WTC11 (cell line): ENCODE measurements at regions of chr19 and their contacts with region 1.

Region 1: GRCh38 chr19:35066691-35067563 is 25.4 kb downstream of the HPN start:
- DNase-seq: peak; percentile 99
- ATAC-seq: peak; percentile 80
- H3K4me3 Mint-ChIP-seq: peak overlapping the region; percentile 29
- H3K27ac Mint-ChIP-seq: peak overlapping the region; percentile 100
- H3K4me1 Mint-ChIP-seq: peaks cover 26% of the 10 kb centered on the region
- H3K27me3 Mint-ChIP-seq: peaks cover 32% of the 10 kb centered on the region
- CTCF ChIP-seq: peak; percentile 92

Region 2: DNA sequence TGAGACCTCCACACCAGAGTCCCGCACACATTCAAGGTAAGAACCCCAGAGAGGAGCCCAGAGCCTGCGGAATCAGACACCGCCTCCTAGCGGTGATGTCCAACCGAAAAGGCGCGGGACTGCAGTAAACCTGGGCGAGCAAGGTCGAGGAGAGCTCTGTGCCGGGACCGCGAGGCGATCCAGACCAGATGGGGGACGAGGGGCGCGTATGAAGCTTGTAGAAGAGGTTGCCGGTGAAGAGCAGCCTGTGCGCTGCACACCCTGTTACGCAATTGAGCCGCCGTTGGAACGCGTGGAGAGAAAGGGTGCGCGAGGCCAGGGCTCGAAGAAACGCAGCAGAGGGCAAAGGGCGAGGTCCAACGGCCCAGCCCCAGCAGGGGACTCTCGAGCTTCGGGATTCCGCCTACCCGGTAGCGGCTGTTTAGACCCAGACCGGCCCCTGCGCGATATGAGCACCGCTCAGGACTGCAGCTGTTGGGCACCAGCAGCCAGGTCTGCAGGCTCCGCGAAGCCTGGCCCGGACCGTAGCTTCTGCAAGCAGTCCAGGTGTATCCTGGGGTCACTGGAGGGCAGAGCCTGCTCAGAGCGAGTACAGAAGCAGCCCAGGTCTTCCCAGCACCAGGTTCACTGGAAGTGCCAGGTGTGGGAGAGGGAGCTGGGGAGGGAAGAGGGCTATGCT is 228.0 kb before region 1 on chr19:
- CTCF ChIA-PET with region 1: interaction called, 13 read pairs
- POLR2A ChIA-PET with region 1: no interaction called
- DNase-seq: peak; percentile 89
- ATAC-seq: peak; percentile 87
- H3K4me3 Mint-ChIP-seq: peak overlapping the region; percentile 75
- H3K27ac Mint-ChIP-seq: no peak overlapping the region
- H3K4me1 Mint-ChIP-seq: peaks cover 19% of the 10 kb centered on the region
- H3K27me3 Mint-ChIP-seq: peaks cover 21% of the 10 kb centered on the region
- CTCF ChIP-seq: peak; percentile 67

Region 3: GRCh38 chr19:34957830-34958751 is 108.8 kb before region 1 on chr19:
- CTCF ChIA-PET with region 1: no interaction called
- POLR2A ChIA-PET with region 1: no interaction called
- DNase-seq: no peak
- ATAC-seq: no peak
- H3K4me3 Mint-ChIP-seq: no peak overlapping the region
- H3K27ac Mint-ChIP-seq: no peak overlapping the region
- H3K4me1 Mint-ChIP-seq: peaks cover 14% of the 10 kb centered on the region
- H3K27me3 Mint-ChIP-seq: peaks cover 22% of the 10 kb centered on the region
- CTCF ChIP-seq: no peak

Region 4: DNA sequence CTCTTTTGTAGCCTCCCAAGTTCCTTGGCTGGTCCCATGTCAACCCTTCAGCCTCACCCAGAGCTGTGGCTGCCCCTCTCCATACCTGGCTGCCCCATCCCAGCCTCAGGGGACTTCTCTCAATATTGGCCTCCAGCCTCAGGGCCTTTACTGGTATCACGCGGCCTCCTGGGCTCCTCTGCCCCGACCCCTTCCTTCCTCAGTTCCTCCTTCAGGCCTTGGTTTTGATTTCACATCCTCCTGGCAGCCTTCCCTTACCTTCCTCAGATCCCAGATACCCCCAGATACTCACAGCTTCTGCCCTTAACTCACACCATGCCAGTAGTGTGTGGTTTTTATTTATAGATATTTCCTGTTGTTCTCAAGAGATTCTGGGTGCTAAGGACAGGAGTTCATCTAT is 49.4 kb before region 1 on chr19:
- CTCF ChIA-PET with region 1: no interaction called
- POLR2A ChIA-PET with region 1: no interaction called
- DNase-seq: no peak
- ATAC-seq: no peak
- H3K4me3 Mint-ChIP-seq: no peak overlapping the region
- H3K27ac Mint-ChIP-seq: no peak overlapping the region
- H3K4me1 Mint-ChIP-seq: peaks cover 7% of the 10 kb centered on the region; the same call in 1 of the 2 replicates
- H3K27me3 Mint-ChIP-seq: no peaks in the 10 kb centered on the region
- CTCF ChIP-seq: no peak

Region 5: DNA sequence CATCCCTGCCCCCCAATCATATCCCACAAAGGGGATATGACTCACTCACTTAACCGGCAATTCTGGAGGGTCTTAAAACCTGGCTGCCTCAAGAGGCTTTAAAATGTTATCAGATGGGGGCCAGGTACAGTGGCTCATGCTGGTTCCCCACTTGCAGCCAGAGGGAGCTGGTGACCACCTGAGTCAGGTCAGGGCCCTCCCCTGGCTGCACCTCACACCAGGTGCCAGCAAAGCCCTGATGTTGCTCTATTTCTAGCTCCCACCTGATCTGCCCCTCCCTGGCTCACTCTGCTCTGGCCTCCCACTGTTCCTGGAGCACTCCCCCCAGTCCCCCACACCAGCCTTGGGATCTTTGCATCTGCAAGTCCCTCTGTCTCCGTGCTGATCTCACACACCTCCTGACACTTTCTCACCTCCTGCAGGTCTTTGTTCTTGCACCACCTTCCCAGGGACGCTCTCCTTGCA is 11.2 kb before region 1 on chr19:
- CTCF ChIA-PET with region 1: interaction called, 81 read pairs
- POLR2A ChIA-PET with region 1: interaction called, 3 read pairs
- DNase-seq: peak; percentile 83
- ATAC-seq: peak; percentile 96
- H3K4me3 Mint-ChIP-seq: peak overlapping the region; percentile 18
- H3K27ac Mint-ChIP-seq: peak overlapping the region; percentile 43; the same call in 1 of the 2 replicates
- H3K4me1 Mint-ChIP-seq: peaks cover 19% of the 10 kb centered on the region
- H3K27me3 Mint-ChIP-seq: no peaks in the 10 kb centered on the region; the same call in 1 of the 2 replicates
- CTCF ChIP-seq: peak; percentile 36

Region 6: GRCh38 chr19:35098413-35099049 is 31.6 kb after region 1 on chr19:
- CTCF ChIA-PET with region 1: interaction called, 11 read pairs
- POLR2A ChIA-PET with region 1: no interaction called
- DNase-seq: no peak
- ATAC-seq: no peak
- H3K4me3 Mint-ChIP-seq: no peak overlapping the region
- H3K27ac Mint-ChIP-seq: no peak overlapping the region
- H3K4me1 Mint-ChIP-seq: peaks cover 10% of the 10 kb centered on the region
- H3K27me3 Mint-ChIP-seq: no peaks in the 10 kb centered on the region
- CTCF ChIP-seq: no peak

Region 7: GRCh38 chr19:35114353-35115176 is 47.6 kb after region 1 on chr19:
- CTCF ChIA-PET with region 1: interaction called, 44 read pairs
- POLR2A ChIA-PET with region 1: no interaction called
- DNase-seq: peak; percentile 92
- ATAC-seq: peak; percentile 82
- H3K4me3 Mint-ChIP-seq: peak overlapping the region; percentile 65
- H3K27ac Mint-ChIP-seq: no peak overlapping the region
- H3K4me1 Mint-ChIP-seq: peaks cover 46% of the 10 kb centered on the region
- H3K27me3 Mint-ChIP-seq: peaks cover 3% of the 10 kb centered on the region
- CTCF ChIP-seq: peak; percentile 99

Region 8: DNA sequence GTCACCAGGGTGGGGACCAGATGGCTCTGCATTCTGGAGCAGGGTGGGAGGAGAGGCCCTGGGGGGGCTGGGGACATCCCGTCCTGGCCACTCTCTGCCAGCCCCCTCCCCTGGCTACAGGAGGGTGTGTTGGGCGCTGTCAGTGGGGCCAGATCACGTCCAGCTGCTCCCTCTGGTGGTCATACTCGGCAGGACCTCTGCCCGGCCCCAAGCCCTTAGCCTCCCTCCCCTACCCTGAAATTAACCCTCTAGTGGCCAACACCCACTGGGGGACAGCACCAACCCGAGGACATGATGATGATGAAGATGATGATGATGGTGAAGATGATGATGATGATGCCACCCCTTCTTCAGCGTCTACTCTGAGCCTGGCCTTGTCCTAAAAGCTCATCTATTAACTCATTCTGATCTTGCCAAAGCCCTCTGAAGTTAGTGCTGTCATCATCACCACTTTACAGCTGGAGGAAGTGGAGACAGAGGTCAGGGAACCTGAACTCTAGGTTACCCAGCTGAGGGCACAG is 68.5 kb after region 1 on chr19:
- CTCF ChIA-PET with region 1: interaction called, 72 read pairs
- POLR2A ChIA-PET with region 1: interaction called, 3 read pairs
- DNase-seq: peak; percentile 88
- ATAC-seq: peak; percentile 91
- H3K4me3 Mint-ChIP-seq: peak overlapping the region; percentile 10; the same call in 1 of the 2 replicates
- H3K27ac Mint-ChIP-seq: no peak overlapping the region
- H3K4me1 Mint-ChIP-seq: peaks cover 21% of the 10 kb centered on the region
- H3K27me3 Mint-ChIP-seq: peaks cover 9% of the 10 kb centered on the region
- CTCF ChIP-seq: peak; percentile 93

Region 9: DNA sequence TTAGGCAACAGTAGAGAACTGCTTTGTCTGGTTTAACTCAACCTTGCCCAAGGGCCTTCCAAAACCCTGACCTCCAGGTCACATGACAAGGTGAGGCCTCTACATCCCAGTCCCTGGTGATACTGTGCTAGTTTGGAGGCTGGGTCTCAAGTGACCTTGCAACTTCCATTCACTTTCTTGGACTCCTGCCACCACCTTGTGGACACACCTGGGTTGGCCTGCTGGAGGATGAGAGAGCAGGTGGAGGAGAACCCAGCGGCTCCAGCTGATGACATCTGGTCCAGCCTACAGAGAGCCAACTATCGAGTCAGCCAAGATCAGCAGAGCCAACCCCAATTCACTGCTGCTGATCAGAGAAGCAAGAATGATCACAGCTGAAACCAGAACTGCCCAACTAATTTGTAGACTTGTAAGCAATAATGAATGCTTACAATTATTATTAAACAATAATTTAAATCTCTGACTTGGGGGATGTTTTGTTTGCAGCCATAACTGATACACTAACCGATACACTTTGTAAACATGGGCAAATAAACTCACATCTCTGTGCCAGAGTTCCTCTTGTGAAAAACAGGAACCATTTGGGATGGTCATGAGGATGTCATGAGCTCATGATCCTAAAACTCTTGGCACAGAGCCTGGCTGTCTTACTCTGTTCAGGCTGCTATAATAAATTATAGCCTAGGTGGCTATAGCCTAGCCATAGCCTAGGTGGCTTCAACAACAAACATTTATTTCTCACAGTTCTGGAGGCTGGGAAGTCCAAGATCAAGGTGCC is 150.1 kb after region 1 on chr19:
- CTCF ChIA-PET with region 1: interaction called, 13 read pairs
- POLR2A ChIA-PET with region 1: no interaction called
- DNase-seq: peak; percentile 59
- ATAC-seq: peak; percentile 60
- H3K4me3 Mint-ChIP-seq: no peak overlapping the region
- H3K27ac Mint-ChIP-seq: no peak overlapping the region
- H3K4me1 Mint-ChIP-seq: peaks cover 17% of the 10 kb centered on the region
- H3K27me3 Mint-ChIP-seq: peaks cover 5% of the 10 kb centered on the region; the same call in 1 of the 2 replicates
- CTCF ChIP-seq: no peak